ENCODE measurements at regions of chr5 and their contacts with region 1.

Region 1: DNA sequence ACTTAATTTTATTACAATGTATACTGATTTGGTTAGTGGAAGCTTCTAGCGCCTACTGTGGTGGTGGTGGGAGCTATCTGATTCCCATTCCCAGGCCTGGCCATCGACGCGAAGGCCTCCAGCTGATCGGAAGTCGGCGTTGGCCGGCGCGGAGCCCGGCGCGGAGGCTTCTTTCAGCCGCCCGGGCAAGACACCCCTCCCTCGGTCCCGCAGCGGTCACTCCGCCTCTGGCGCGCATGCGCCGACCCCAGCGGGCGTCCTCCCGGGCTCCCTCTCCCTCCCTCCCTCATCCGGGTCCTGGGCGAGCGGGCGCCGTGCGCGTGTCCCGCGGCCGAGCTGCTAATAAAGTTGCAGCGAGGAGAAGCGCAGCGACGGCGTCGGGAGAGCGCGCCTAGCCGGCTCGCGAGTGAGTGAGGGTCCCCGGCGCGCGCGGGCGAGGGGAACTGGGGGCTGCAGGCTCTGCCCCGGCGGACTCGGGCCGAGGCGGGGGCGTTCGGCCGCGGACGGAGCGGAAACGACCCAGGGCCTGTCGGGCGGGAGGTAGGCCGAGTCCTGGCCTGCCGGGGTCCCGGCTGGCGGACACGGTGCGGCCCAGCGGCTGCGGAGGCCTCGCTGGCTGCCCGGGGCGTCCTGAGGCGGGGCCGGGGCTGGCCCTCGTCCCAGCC is at the start of gene SMAD5:
- DNase-seq: peak; percentile 92 to 95
- ATAC-seq: peak; percentile 93 to 95
- H3K4me3 ChIP-seq: peak within 1 kb of the TSS; percentile 73 to 97 (median 86)
- H3K27ac ChIP-seq: peak within 1 kb of the TSS; percentile 91 to 98 (median 96)
- H3K4me1 ChIP-seq: peaks cover 34 to 48% of the 10 kb centered on the region in 2 donors
- H3K27me3 ChIP-seq: no peaks in the 10 kb centered on the region
- CTCF ChIP-seq: no peak
- POLR2A ChIP-seq: peak; percentile 93
- total RNA-seq, gene SMAD5: 25.6 to 50.1 (median 32.0) TPM

Region 2: DNA sequence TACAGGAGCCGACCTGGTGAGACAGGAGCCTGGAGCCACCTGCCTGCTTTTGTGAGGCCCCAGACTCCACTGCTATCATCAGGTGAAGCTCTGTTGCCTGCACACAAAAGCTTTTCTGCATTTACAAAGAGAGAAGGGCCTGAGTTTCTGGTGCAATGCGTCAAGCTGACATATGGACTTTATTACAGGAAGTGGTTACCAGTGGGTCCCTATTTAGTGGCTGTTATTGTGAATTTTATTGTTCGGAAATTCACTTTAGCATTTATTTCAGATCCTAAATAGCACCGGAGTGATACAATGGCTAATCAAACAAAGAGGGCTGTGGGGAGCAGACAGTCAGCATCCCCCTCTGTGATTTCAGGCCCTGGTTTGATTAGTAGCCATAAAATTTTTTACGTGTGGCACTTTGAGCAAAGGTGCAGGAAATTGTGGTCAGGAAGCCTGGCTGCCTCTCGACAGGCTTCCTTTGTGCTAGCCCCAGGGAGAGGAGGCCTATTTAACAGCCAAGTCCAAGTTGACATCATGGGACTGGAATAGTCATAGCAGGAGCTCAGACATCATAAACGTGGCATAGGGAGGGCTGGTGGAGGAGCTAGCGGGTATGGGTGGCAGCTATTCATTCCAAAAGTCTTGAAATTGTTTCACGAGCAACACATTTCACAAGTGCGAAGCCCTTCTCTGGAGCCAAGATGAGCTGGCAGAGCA is 95.5 kb before region 1 on chr5:
- in situ Hi-C with region 1: no loop called
- intact Hi-C with region 1: loop called (anchors 2 kb)
- DNase-seq: peak; percentile 56 to 78
- ATAC-seq: peak; percentile 92 to 94
- H3K4me3 ChIP-seq: no peak overlapping the region
- H3K27ac ChIP-seq: peak overlapping the region; percentile 61 to 74 (median 66)
- H3K4me1 ChIP-seq: peaks cover 42 to 56% of the 10 kb centered on the region in 2 donors
- H3K27me3 ChIP-seq: no peaks in the 10 kb centered on the region
- CTCF ChIP-seq: no peak
- POLR2A ChIP-seq: peak; percentile 21 to 48

Region 3: DNA sequence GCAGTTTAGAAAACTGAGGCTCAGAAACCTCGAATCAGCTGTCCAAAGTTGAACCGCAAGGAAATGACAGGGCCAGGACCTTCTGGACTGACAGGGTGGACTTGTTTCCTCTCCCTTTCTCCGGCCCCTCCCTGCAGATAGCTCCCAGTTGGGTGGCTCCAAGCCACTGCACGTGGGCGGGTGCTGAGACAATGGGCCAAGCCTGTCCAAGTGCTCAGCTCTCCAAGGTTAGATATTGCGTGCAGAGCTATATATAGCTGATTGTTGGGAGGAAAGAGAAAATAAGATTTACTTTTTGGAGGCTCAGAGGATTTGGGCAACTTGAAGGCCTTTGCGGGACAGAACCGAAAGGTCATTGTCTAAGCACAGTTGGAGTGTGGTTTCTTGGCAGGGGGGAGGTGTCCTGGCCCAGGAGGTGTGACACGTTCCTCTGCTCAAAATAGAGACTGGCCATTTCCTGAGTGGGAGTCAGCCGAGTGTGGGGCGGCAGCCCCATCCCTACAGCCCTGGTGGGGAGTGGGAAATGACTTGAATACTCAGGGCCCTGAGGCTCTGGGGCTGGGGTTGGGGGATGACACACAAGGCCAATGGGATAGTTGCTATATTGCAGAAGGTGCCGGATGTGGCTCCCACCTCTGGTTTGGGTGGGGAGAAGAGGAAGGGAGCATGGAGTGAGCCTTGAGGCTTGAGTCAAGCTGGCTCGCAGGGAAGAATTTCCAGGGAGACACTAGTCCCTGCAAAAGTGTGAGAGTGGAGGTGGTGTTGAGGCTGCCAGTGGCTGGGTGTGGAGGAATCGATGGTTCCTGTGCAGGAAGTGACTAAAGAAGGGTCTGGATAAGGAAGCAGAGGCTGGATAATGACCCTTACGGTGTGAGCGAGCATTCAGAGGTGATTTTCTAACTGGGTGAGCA is 44.5 kb before region 1 on chr5:
- in situ Hi-C with region 1: no loop called
- intact Hi-C with region 1: loop called (anchors 2 kb)
- DNase-seq: peak; percentile 31 to 75
- ATAC-seq: peak; percentile 90 to 96
- H3K4me3 ChIP-seq: peak overlapping the region in 2 of 4 donors; percentile 4 to 8
- H3K27ac ChIP-seq: peak overlapping the region; percentile 62 to 82 (median 76)
- H3K4me1 ChIP-seq: peaks cover 10 to 11% of the 10 kb centered on the region in 2 donors
- H3K27me3 ChIP-seq: no peaks in the 10 kb centered on the region
- CTCF ChIP-seq: no peak
- POLR2A ChIP-seq: no peak